Activated CD8-positive, alpha-beta T cell treated with anti-CD3 and anti-CD28 coated beads for 36 hours (primary cell): ENCODE measurements at regions of chr3 and their contacts with region 1.

Region 1: GRCh38 chr3:151838583-151839312 is 24.8 kb downstream of the AADAC start:
- DNase-seq: peak; percentile 51
- ATAC-seq: peak; percentile 76
- H3K4me3 Mint-ChIP-seq: no peak overlapping the region
- H3K27ac Mint-ChIP-seq: no peak overlapping the region
- H3K4me1 Mint-ChIP-seq: no peaks in the 10 kb centered on the region
- H3K27me3 Mint-ChIP-seq: peaks cover 3% of the 10 kb centered on the region
- CTCF ChIP-seq: peak; percentile 77

Region 2: DNA sequence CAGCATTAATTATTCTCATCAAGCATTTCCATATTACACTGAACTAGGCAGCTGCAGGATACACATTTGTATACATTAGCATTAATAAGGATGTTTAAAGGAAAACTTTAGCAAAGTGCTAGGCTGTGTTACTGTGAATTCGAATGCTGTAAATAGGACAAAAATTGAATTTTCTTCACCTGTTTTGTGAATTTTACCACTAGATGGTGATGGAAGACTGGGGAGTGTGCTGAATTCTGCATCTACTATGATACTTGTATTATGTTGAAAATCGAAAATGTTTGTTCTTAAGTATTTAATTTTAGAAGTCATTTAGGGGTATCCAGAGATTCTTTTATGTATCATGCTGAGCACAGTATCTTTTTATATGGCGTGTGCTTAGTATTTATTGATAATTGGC is 548.1 kb before region 1 on chr3:
- CTCF ChIA-PET with region 1: interaction called, 12 read pairs
- POLR2A ChIA-PET with region 1: no interaction called
- intact Hi-C with region 1: loop called (anchors 10 kb)
- DNase-seq: no peak
- ATAC-seq: no peak
- H3K4me3 Mint-ChIP-seq: no peak overlapping the region
- H3K27ac Mint-ChIP-seq: no peak overlapping the region
- H3K4me1 Mint-ChIP-seq: peaks cover 2% of the 10 kb centered on the region
- H3K27me3 Mint-ChIP-seq: peaks cover 7% of the 10 kb centered on the region
- CTCF ChIP-seq: peak; percentile 65

Region 3: GRCh38 chr3:151439652-151440129 is 399.1 kb before region 1 on chr3:
- CTCF ChIA-PET with region 1: interaction called, 35 read pairs
- POLR2A ChIA-PET with region 1: no interaction called
- intact Hi-C with region 1: loop called (anchors 5 kb)
- DNase-seq: peak; percentile 17
- ATAC-seq: peak; percentile 66
- H3K4me3 Mint-ChIP-seq: no peak overlapping the region
- H3K27ac Mint-ChIP-seq: no peak overlapping the region
- H3K4me1 Mint-ChIP-seq: no peaks in the 10 kb centered on the region
- H3K27me3 Mint-ChIP-seq: no peaks in the 10 kb centered on the region
- CTCF ChIP-seq: peak; percentile 64

Region 4: DNA sequence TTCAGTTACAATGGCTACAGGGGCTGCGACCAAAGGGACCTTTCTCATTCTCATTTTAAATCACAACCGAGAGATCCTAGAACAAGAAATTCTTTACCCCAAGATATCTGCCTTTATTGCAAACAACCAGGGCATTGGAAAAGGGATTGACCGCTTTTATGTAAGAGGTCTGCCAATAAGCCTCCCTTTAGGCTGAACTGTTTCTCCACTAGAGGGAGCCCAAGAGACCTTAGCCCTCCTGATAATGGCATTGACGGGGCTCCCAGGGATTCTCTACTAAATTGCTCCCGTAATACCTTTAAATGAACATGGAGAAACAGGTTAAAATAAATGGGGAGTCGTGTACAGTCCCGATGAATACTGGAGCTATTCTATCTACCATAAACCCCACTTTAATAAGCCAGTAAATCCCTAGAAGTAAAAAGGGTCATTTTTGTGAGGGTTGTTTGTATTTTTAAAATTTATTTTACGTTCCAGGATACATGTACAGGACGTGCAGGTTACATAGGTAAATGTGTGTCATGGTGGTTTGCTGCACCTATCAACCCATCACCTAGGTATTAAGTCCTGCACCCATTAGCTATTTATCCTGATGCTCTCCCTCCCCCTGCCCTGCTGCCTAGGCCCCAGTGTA is 370.3 kb before region 1 on chr3:
- CTCF ChIA-PET with region 1: interaction called, 29 read pairs
- POLR2A ChIA-PET with region 1: no interaction called
- intact Hi-C with region 1: loop called (anchors 10 kb)
- DNase-seq: peak; percentile 39
- ATAC-seq: peak; percentile 69
- H3K4me3 Mint-ChIP-seq: no peak overlapping the region
- H3K27ac Mint-ChIP-seq: no peak overlapping the region
- H3K4me1 Mint-ChIP-seq: no peaks in the 10 kb centered on the region
- H3K27me3 Mint-ChIP-seq: no peaks in the 10 kb centered on the region
- CTCF ChIP-seq: peak; percentile 75

Region 5: DNA sequence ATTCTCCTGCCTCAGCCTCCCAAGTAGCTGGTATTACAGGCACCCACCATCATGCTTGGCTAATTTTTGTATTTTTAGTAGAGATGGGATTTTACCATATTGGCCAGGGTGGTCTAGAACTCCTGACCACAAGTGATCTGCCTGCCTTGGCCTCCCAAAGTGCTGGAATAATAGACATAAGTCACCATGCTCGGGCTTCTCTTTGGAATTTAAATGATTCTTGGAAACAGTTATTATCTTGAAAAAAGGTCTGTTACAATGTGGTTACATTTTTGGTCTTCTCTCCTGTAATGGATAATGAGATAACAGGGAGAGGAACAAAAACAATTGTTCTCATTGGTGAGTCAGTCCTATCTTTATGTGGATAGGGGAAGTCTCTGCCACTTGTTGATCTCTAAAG is 164.8 kb before region 1 on chr3:
- CTCF ChIA-PET with region 1: no interaction called
- POLR2A ChIA-PET with region 1: no interaction called
- intact Hi-C with region 1: no loop called
- DNase-seq: no peak
- ATAC-seq: no peak
- H3K4me3 Mint-ChIP-seq: no peak overlapping the region
- H3K27ac Mint-ChIP-seq: no peak overlapping the region
- H3K4me1 Mint-ChIP-seq: no peaks in the 10 kb centered on the region
- H3K27me3 Mint-ChIP-seq: peaks cover 1% of the 10 kb centered on the region
- CTCF ChIP-seq: no peak

Region 6: GRCh38 chr3:152258448-152259393 is 420.0 kb after region 1 on chr3:
- CTCF ChIA-PET with region 1: no interaction called
- POLR2A ChIA-PET with region 1: no interaction called
- intact Hi-C with region 1: no loop called
- DNase-seq: peak; percentile 82
- ATAC-seq: peak; percentile 76
- H3K4me3 Mint-ChIP-seq: peak overlapping the region; percentile 66
- H3K27ac Mint-ChIP-seq: peak overlapping the region; percentile 96
- H3K4me1 Mint-ChIP-seq: peaks cover 82% of the 10 kb centered on the region
- H3K27me3 Mint-ChIP-seq: no peaks in the 10 kb centered on the region
- CTCF ChIP-seq: no peak